ENCODE measurements at regions of chr18 and their contacts with region 1.

Region 1: DNA sequence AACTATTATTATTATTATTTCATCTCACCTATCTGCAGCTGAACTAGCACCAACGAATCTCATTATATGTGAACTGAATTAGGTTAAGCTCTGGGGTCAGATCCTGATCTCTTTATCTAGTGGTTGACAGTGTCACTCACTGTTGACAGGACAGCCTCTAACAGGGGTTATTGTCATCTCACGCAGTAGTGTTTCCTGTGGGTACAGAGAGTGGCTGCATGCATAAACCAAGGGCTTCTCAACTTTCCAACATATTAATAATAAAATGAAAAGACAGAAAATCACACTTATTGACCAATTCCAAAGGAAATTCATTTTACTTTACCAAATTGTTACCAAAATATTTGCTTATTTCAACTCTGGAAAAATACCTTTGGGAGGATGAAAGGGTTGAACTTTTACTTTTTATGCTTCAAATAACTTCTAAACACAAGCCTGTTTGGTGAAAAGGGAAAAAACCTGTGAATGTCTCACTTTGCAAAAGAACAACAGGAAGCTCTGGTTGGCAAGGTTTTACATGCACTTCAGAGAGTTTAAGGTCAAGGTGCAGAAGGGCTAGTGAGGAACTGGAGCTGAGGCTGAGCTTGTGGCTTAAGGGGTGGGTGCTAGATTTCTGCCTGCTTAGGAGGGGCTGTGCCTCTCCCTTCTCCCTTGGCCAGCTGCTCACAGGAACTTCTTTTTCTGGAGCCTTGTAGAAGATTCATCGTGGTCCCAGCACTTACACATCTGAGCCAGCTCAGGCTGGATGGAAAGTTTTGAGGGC is 72.6 kb downstream of the CTAGE1 start:
- DNase-seq: no peak
- ATAC-seq: no peak
- H3K4me3 ChIP-seq: no peak overlapping the region
- H3K27ac ChIP-seq: no peak overlapping the region
- H3K4me1 ChIP-seq: no peaks in the 10 kb centered on the region
- H3K27me3 ChIP-seq: peaks cover 8 to 12% of the 10 kb centered on the region in 2 experiments
- CTCF ChIP-seq: no peak
- EP300 ChIP-seq: no peak
- POLR2A ChIP-seq: no peak
- RAD21 ChIP-seq: no peak

Region 2: GRCh38 chr18:22279741-22280452 is 65.2 kb before region 1 on chr18:
- CTCF ChIA-PET with region 1: no interaction called
- POLR2A ChIA-PET with region 1: no interaction called
- RAD21 ChIA-PET with region 1: no interaction called
- SMC1A ChIA-PET with region 1: no interaction called
- in situ Hi-C with region 1: no loop called
- intact Hi-C with region 1: no loop called
- DNase-seq: no peak
- ATAC-seq: no peak
- H3K4me3 ChIP-seq: no peak overlapping the region
- H3K27ac ChIP-seq: no peak overlapping the region
- H3K4me1 ChIP-seq: no peaks in the 10 kb centered on the region
- H3K27me3 ChIP-seq: no peaks in the 10 kb centered on the region
- CTCF ChIP-seq: no peak
- EP300 ChIP-seq: no peak
- POLR2A ChIP-seq: no peak
- RAD21 ChIP-seq: no peak

Region 3: GRCh38 chr18:22332590-22332989 is 12.5 kb before region 1 on chr18:
- CTCF ChIA-PET with region 1: no interaction called
- POLR2A ChIA-PET with region 1: no interaction called
- RAD21 ChIA-PET with region 1: no interaction called
- SMC1A ChIA-PET with region 1: interaction called, 12 read pairs
- in situ Hi-C with region 1: no loop called
- intact Hi-C with region 1: no loop called
- DNase-seq: no peak
- ATAC-seq: peak; percentile 48
- H3K4me3 ChIP-seq: no peak overlapping the region
- H3K27ac ChIP-seq: no peak overlapping the region
- H3K4me1 ChIP-seq: no peaks in the 10 kb centered on the region
- H3K27me3 ChIP-seq: no peaks in the 10 kb centered on the region; a peak in 1 of 4 replicates
- CTCF ChIP-seq: 0 out of 6 replicates have a peak, but pooled peaks of 2 of the 3 experiments have one; percentile 19 to 21
- EP300 ChIP-seq: no peak
- POLR2A ChIP-seq: no peak
- RAD21 ChIP-seq: no peak